ENCODE measurements at regions of chr5 and their contacts with region 1.

Region 1: GRCh38 chr5:122515709-122516431 is 203.8 kb downstream of the SNCAIP start:
- DNase-seq: no peak
- ATAC-seq: peak in 1 of 2 donors; percentile 49
- H3K4me3 ChIP-seq: no peak overlapping the region
- H3K27ac ChIP-seq: no peak overlapping the region
- H3K4me1 ChIP-seq: no peaks in the 10 kb centered on the region
- H3K27me3 ChIP-seq: no peaks in the 10 kb centered on the region
- CTCF ChIP-seq: peak in 3 of 5 experiments; percentile 21 to 36 (median 34)
- POLR2A ChIP-seq: no peak

Region 2: GRCh38 chr5:122565331-122565730 is 49.5 kb after region 1 on chr5:
- in situ Hi-C with region 1: no loop called
- intact Hi-C with region 1: no loop called
- DNase-seq: no peak
- ATAC-seq: no peak
- H3K4me3 ChIP-seq: no peak overlapping the region
- H3K27ac ChIP-seq: no peak overlapping the region
- H3K4me1 ChIP-seq: no peaks in the 10 kb centered on the region
- H3K27me3 ChIP-seq: no peaks in the 10 kb centered on the region
- CTCF ChIP-seq: no peak
- POLR2A ChIP-seq: no peak

Region 3: DNA sequence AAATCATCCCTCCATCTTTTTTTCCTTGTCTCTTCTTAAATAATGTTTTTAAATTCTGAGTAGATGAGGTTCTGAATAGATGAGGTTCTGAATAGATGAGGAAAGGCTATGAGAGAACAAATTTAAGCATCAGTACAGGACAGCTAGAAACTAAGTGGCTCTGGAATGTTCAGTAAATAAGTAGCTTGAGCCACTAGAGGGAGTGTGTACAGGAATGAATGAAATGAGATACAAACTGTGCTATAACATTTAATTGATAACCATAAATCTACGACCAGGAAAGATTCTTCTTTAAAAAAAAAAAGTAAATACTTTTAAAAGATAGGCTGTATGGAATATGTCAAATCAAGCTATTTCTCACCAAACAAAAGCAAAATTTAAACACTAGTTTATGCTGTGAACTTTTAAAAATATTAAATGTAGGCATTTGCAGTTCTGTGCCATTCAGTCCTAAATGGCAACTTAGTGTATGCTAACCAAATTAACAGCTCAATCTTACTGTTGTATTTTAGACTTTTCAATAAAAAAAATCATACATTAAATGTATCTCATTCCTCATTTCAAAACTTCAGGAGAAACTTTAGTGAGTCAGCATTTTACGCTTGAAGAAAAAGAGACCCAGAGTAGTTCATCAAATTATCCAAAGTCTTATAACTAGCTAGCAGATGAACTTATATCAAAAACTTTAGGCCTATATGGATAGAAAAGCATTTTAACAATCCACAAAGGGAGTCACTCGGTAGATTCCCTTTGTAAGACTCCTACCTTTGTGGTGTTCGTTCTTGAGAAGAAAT is 188.6 kb after region 1 on chr5:
- in situ Hi-C with region 1: no loop called
- intact Hi-C with region 1: no loop called
- DNase-seq: no peak
- ATAC-seq: no peak
- H3K4me3 ChIP-seq: no peak overlapping the region
- H3K27ac ChIP-seq: no peak overlapping the region
- H3K4me1 ChIP-seq: no peaks in the 10 kb centered on the region
- H3K27me3 ChIP-seq: no peaks in the 10 kb centered on the region
- CTCF ChIP-seq: peak in 1 of 5 experiments; percentile 44
- POLR2A ChIP-seq: no peak

Region 4: DNA sequence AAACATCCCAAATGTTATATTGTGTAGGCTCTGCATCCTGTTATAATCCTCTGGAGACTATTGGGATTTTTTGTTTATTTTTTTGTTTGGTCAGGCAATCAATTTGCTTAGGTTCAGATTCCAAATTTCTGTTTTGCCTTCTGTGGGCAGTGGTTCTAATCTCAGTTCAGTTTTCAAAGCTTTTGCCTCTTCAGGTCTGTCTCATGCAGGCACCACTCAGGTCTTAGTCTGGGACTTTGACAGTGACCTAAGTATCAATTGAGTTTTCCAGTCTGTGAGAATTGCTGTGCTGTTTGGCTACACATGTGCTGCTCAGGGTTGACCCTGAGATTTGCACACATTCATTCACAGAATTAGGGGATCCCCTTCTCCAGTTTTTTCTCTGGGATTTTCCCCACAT is 273.1 kb after region 1 on chr5:
- in situ Hi-C with region 1: no loop called
- intact Hi-C with region 1: no loop called
- DNase-seq: no peak
- ATAC-seq: no peak
- H3K4me3 ChIP-seq: no peak overlapping the region
- H3K27ac ChIP-seq: no peak overlapping the region
- H3K4me1 ChIP-seq: peaks cover 0 to 3% of the 10 kb centered on the region in 2 donors
- H3K27me3 ChIP-seq: no peaks in the 10 kb centered on the region
- CTCF ChIP-seq: no peak
- POLR2A ChIP-seq: no peak

Region 5: DNA sequence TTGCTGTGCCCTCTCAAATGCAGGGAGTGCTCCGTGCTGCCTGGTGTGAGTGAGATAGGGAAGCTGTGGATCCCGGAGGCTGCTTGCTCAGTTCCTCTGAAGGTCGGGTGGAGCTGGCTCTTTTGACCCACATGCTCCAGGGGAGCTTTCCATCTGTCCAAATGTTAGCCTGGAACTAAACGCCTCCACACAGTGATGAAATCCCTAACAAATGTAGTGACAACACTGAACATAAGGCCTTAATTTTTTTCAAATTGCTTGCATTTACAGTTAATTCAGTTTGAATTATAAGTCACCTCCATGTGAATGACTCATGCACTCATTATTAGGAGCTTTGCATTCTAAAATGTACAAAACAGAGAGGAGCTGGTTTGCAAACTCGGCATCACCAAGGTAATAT is 600.2 kb after region 1 on chr5:
- in situ Hi-C with region 1: no loop called
- intact Hi-C with region 1: no loop called
- DNase-seq: no peak
- ATAC-seq: no peak
- H3K4me3 ChIP-seq: no peak overlapping the region
- H3K27ac ChIP-seq: no peak overlapping the region
- H3K4me1 ChIP-seq: no peaks in the 10 kb centered on the region
- H3K27me3 ChIP-seq: no peaks in the 10 kb centered on the region
- CTCF ChIP-seq: no peak
- POLR2A ChIP-seq: no peak

Region 6: GRCh38 chr5:123371575-123372179 is 855.8 kb after region 1 on chr5:
- in situ Hi-C with region 1: loop called in 3 of 4 experiments (anchors 25 kb)
- intact Hi-C with region 1: no loop called
- DNase-seq: peak in 1 of 2 donors; percentile 12
- ATAC-seq: no peak
- H3K4me3 ChIP-seq: no peak overlapping the region
- H3K27ac ChIP-seq: no peak overlapping the region
- H3K4me1 ChIP-seq: no peaks in the 10 kb centered on the region
- H3K27me3 ChIP-seq: no peaks in the 10 kb centered on the region
- CTCF ChIP-seq: peak in 2 of 5 experiments; percentile 29 to 45
- POLR2A ChIP-seq: no peak

Measured in gastrocnemius medialis (tissue), 4 donors.